ENCODE measurements at regions of chr20 and their contacts with region 1.

Region 1: DNA sequence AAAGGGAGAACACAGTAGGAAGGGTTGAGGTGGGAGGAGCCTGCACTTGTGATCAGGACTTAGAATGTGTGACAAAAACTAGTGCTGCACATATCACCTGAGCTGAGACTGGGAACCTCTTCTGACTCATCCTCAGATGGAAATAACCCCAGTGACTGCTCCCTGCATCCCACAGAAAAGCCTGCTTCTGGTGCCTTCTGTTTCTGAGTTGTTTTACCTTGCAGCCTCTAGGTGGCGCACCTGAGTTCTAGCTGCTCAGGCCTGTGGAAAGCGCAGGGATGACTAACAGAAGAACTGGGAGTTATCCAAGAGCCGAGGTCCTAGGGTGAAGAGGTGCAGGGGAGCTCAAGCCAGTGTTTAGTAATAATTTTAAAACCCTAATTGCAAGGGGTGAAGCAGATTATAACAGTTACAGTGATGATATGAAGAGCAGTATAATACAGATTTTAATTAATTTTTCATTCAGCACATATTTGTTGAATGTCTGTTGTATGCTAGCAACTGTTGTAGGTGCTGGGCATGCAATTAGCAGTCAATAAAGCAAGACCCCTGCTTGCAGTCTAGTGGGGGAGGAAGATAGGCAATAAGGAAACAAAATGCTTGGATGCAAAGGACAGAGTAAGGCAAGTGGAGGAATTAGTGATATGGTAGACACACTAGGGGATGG is 302.5 kb downstream of the DHX35 start:
- DNase-seq: peak; percentile 67 to 76 (median 70)
- ATAC-seq: peak; percentile 57 to 64
- H3K4me3 ChIP-seq: no peak overlapping the region
- H3K27ac ChIP-seq: no peak overlapping the region
- H3K4me1 ChIP-seq: no peaks in the 10 kb centered on the region
- H3K27me3 ChIP-seq: no peaks in the 10 kb centered on the region

Region 2: DNA sequence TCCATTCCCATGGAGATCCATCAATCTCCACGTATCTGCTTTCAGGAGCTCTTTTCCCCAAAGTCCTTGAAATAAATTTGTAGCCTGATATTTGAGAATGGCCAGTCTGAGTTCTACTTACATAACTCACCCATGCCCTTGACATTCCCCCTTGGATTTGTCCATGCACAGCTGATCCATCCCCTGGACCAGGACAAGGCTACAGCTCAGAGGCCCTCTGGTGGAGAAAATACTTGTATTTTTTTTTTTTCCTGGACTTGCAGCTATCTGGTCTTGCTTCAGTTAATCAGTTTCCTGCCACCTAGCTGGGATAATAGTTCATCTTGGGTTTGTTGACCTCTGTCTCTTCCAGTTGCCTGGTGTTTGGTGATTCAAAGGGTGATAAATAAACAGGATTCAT is 165.1 kb after region 1 on chr20:
- intact Hi-C with region 1: loop called in 1 of 4 experiments (anchors 5 kb)
- DNase-seq: peak in 2 of 3 donors; percentile 14 to 38
- ATAC-seq: peak in 1 of 2 donors; percentile 66
- H3K4me3 ChIP-seq: no peak overlapping the region
- H3K27ac ChIP-seq: no peak overlapping the region
- H3K4me1 ChIP-seq: no peaks in the 10 kb centered on the region
- H3K27me3 ChIP-seq: no peaks in the 10 kb centered on the region

Region 3: GRCh38 chr20:39874049-39874888 is 609.6 kb after region 1 on chr20:
- intact Hi-C with region 1: loop called in 1 of 4 experiments (anchors 10 kb)
- DNase-seq: peak; percentile 82 to 91 (median 85)
- ATAC-seq: peak; percentile 95 to 98
- H3K4me3 ChIP-seq: no peak overlapping the region
- H3K27ac ChIP-seq: no peak overlapping the region
- H3K4me1 ChIP-seq: no peaks in the 10 kb centered on the region
- H3K27me3 ChIP-seq: no peaks in the 10 kb centered on the region

Measured in right cardiac atrium (tissue), 5 donors.